ENCODE measurements at regions of chr22 and their contacts with region 1.

Region 1: GRCh38 chr22:25564320-25564978 is at the start of gene GRK3:
- DNase-seq: peak; percentile 70
- H3K4me3 Mint-ChIP-seq: peak within 1 kb of the TSS; percentile 94
- H3K27ac Mint-ChIP-seq: peak within 1 kb of the TSS; percentile 88
- H3K4me1 Mint-ChIP-seq: peaks cover 65% of the 10 kb centered on the region
- H3K27me3 Mint-ChIP-seq: no peaks in the 10 kb centered on the region
- total RNA-seq, gene GRK3: 33.0 and 38.2 TPM in 2 replicates

Region 2: GRCh38 chr22:25067851-25068421 is 496.5 kb before region 1 on chr22:
- intact Hi-C with region 1: loop called (anchors 10 kb)
- DNase-seq: peak; percentile 82
- H3K4me3 Mint-ChIP-seq: peak overlapping the region; percentile 94
- H3K27ac Mint-ChIP-seq: peak overlapping the region; percentile 99
- H3K4me1 Mint-ChIP-seq: peaks cover 83% of the 10 kb centered on the region
- H3K27me3 Mint-ChIP-seq: no peaks in the 10 kb centered on the region

Region 3: GRCh38 chr22:25465949-25466348 is 98.5 kb before region 1 on chr22:
- intact Hi-C with region 1: loop called (anchors 2 kb)
- DNase-seq: no peak
- H3K4me3 Mint-ChIP-seq: no peak overlapping the region
- H3K27ac Mint-ChIP-seq: peak overlapping the region; percentile 25
- H3K4me1 Mint-ChIP-seq: peaks cover 19% of the 10 kb centered on the region
- H3K27me3 Mint-ChIP-seq: no peaks in the 10 kb centered on the region

Region 4: DNA sequence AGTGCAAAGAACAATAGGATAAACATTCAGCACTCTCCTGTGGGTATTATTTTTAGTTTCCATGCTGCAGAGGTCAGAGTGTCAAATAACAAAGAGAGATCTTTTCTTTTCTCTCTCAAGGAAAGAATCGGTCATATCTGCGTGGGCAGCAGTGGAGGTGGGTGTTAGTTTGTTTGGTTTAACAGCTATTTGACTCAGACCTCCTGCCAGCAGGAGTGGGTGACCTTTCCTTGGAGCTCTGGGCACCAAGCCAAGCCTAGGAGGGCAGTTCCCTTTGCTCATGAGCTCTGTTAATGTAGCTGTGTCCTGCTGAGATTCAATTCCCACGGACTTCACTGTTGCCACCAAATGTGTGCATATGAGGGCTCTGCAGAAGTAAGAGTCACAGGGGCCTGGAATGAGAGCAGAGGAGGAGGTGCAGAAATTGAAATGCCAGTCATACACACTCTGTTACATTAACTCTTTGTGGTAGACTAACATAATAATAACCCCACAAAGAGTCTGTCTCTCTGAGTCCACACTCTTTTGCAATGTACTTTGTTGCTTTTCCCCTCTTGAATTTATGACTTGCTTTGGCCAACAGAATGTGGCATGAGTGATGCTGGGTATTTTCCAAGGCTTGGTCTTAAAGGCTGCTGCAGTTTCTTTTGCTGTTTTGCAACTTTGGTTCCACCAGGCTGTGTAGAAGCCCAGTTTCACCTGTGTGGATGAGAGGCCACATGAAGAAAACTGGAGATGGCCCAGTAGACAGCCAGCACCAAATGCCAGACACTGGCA is 76.0 kb before region 1 on chr22:
- intact Hi-C with region 1: loop called (anchors 1 kb)
- DNase-seq: no peak
- H3K4me3 Mint-ChIP-seq: peak overlapping the region; percentile 28
- H3K27ac Mint-ChIP-seq: peak overlapping the region; percentile 90
- H3K4me1 Mint-ChIP-seq: peaks cover 62% of the 10 kb centered on the region
- H3K27me3 Mint-ChIP-seq: peaks cover 4% of the 10 kb centered on the region

Region 5: DNA sequence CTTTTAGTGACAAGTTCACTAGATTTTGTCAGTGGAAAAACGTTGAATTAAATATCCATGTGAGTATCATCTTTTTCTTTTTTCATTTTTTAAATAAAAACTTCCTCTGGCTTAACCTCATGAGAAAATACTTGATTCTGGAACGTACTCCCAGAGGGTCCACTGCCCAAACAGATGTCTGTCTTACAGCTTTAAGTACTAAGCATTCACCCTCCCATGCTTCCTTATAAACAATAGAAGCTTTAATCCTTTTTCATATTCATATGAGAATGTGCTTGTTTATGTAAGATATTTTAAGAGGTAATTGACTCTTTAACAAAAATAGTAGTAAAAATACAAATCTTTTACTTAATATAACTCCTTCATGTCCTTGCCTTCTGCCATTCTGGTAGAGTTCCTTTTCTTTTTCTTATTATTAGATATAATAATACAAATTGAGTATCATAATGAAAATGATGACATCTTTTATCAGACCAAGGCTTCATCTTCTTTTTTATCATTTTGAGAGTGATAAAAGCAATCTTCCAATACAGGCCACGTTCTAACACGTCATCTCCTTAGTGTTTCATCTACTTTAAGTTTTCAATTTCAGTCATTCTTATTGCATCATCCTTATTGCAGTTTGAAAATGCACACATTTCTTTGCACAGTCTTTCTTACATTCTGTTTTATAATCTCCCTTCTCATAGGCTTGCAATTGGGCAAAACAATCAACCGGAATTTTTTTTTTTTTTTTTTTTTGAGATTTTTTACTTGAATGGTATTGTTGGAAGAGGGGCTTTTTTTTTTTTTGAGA is 108.0 kb after region 1 on chr22:
- intact Hi-C with region 1: loop called (anchors 1 kb)
- DNase-seq: no peak
- H3K4me3 Mint-ChIP-seq: no peak overlapping the region
- H3K27ac Mint-ChIP-seq: peak overlapping the region; percentile 81
- H3K4me1 Mint-ChIP-seq: peaks cover 15% of the 10 kb centered on the region
- H3K27me3 Mint-ChIP-seq: no peaks in the 10 kb centered on the region

Region 6: GRCh38 chr22:25777870-25778269 is 213.4 kb after region 1 on chr22:
- intact Hi-C with region 1: loop called (anchors 1 kb)
- DNase-seq: peak; percentile 8
- H3K4me3 Mint-ChIP-seq: no peak overlapping the region
- H3K27ac Mint-ChIP-seq: no peak overlapping the region
- H3K4me1 Mint-ChIP-seq: peaks cover 4% of the 10 kb centered on the region
- H3K27me3 Mint-ChIP-seq: no peaks in the 10 kb centered on the region

Measured in activated T-helper 1 cell treated with anti-CD3 and anti-CD28 coated beads, Interleukin-12 subunit alpha, Interleukin-12 subunit beta, Interleukin-2, Interleukin-4 antibody, amounts not matched to agents 30 ng/mL and 10 ng/mL and 1 ng/mL, durations not matched to agents 14 hours and 24 hours and 36 hours (primary cell).